Esophagus muscularis mucosa (tissue), 4 donors: ENCODE measurements at regions of chr18 and their contacts with region 1.

Region 1: DNA sequence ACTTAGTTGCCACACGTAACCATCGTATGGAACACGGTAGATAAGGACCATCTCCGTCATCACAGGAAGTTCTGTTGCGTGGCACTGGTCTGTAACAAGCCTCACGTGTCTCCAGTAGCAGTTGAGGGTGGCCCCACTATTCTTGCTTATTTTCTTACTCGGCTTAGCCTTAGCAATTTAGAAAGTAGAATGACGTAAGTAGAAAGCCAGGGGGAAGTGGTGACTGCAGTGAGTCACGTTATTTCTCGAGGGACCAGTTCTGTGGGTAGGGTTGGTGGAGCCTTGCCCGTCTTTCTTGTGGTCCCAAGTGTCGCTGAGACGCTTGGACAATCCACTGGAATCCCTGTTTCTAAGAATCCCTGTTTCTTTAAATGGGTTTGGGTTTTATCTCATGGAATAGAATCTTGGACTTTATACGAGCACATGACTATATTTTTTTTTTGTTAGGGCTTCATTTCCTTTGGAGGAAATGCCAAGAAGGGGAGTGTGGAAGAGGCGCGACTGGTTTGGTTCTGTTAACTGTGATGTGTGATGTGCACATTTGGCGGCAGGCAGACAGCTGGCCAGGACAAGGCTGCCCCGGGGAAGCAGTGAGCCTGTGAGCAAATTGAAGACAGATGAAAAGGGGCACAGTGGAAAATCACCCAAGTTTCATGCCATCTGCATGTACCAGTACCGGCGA is 96.2 kb downstream of the CABLES1 start:
- DNase-seq: no peak
- H3K4me3 ChIP-seq: no peak overlapping the region
- H3K27ac ChIP-seq: peak overlapping the region; percentile 30 to 72 (median 54)
- H3K4me1 ChIP-seq: peaks cover 33 to 54% (median 49%) of the 10 kb centered on the region in 4 donors
- H3K27me3 ChIP-seq: no peaks in the 10 kb centered on the region
- CTCF ChIP-seq: no peak
- EP300 ChIP-seq: no peak
- POLR2A ChIP-seq: no peak

Region 2: DNA sequence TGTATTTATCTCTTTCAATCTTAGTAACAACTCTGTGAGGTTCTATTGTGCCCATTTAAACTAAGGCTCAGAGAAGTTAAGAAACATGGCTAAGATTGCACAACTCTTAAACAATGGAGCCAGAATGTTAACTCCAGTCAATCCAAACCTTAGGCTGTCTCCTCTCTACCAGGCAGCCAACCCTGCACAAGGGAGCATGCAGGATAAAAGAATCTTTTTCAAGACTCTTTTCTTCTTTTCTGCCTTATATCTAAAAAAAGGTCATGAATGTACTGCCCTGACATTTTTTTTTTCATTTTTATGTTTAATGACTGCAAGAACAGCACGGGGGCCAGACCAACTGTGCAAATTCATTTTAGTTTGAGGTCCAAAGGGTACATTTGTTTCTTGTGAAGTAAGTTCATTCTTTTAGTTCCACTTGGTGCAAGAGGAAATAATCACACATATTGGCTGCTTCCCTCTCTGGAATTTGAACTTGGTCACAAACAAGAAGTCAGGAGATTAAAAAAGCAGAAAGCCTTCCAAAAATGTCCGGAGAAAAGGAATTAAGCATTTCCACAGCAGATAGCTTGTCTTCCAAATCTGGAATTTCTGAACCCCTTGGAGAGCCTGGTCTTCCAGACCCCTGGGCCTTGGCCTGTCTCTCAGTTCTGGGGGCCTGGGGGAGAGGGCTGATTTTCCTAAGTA is 125.6 kb after region 1 on chr18:
- intact Hi-C with region 1: loop called (anchors 10 kb)
- DNase-seq: no peak
- H3K4me3 ChIP-seq: no peak overlapping the region
- H3K27ac ChIP-seq: peak overlapping the region; percentile 56 to 71 (median 62)
- H3K4me1 ChIP-seq: peaks cover 23 to 37% (median 33%) of the 10 kb centered on the region in 4 donors
- H3K27me3 ChIP-seq: no peaks in the 10 kb centered on the region
- CTCF ChIP-seq: no peak
- EP300 ChIP-seq: no peak
- POLR2A ChIP-seq: no peak